Stomach (tissue), 19 donors: ENCODE measurements at regions of chr6 and their contacts with region 1.

Region 1: DNA sequence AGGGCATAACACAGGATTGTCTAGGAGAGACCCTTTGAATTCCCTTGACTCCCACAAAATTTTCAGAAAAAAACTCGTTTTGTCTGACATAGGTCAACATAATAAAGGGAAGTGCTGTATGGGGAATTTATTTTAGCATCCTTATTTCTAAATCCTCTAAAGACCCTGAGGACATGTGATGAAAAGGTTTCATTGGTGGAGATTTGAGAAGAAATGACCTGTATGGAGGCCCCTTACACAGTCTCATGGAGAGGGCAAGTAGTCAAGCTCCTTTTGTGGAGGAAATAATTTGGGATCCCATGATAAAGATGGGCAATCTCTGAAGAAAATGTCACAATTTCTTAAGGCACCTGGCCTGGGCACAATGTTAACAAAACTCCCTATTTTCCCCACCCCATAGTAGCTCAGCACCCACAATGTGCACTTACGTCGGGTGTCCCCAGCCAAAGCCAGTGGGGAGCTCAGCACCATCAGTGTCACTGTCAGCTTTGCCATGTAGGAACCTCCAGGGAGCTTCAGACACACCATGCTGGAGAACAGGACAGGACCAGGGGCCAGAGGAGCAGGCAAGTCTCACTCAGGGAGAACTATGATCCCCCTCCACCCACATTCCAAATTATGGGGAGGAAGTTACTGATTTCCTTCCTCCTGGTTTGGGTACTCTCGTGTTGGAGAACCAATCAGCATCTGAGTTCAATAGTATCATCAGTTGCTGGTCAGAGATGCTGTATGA is at the start of gene HLA-DRB5:
- DNase-seq: peak; percentile 4 to 34
- H3K4me3 ChIP-seq: no peak within 1 kb of the TSS
- H3K27ac ChIP-seq: no peak within 1 kb of the TSS
- H3K4me1 ChIP-seq: no peaks in the 10 kb centered on the region
- H3K27me3 ChIP-seq: no peaks in the 10 kb centered on the region
- CTCF ChIP-seq: no peak
- EP300 ChIP-seq: no peak
- POLR2A ChIP-seq: no peak
- total RNA-seq, gene HLA-DRB5: 0.43 to 39.1 (median 12.5) TPM in 3 of 5 donors, not detected in the others

Region 2: GRCh38 chr6:32382757-32383156 is 147.1 kb before region 1 on chr6:
- intact Hi-C with region 1: no loop called
- DNase-seq: no peak
- H3K4me3 ChIP-seq: no peak overlapping the region
- H3K27ac ChIP-seq: no peak overlapping the region
- H3K4me1 ChIP-seq: peaks cover 0 to 3% (median 0%) of the 10 kb centered on the region in 4 donors
- H3K27me3 ChIP-seq: no peaks in the 10 kb centered on the region
- CTCF ChIP-seq: no peak
- EP300 ChIP-seq: no peak
- POLR2A ChIP-seq: no peak

Region 3: GRCh38 chr6:32589598-32590449 is 60.0 kb after region 1 on chr6 and contains the start of gene HLA-DRB1:
- intact Hi-C with region 1: loop called (anchors 10 kb)
- DNase-seq: peak; percentile 37 to 61
- H3K4me3 ChIP-seq: no peak within 1 kb of the TSS
- H3K27ac ChIP-seq: peak within 1 kb of the TSS in 1 of 5 donors; percentile 46
- H3K4me1 ChIP-seq: no peaks in the 10 kb centered on the region
- H3K27me3 ChIP-seq: no peaks in the 10 kb centered on the region
- CTCF ChIP-seq: no peak
- EP300 ChIP-seq: no peak
- POLR2A ChIP-seq: no peak
- total RNA-seq, gene HLA-DRB1: 4.1 to 47.1 (median 25.3) TPM

Region 4: GRCh38 chr6:32666420-32667300 is 136.8 kb after region 1 on chr6 and contains the start of gene HLA-DQB1:
- intact Hi-C with region 1: no loop called
- DNase-seq: peak in 1 of 2 donors; percentile 61
- H3K4me3 ChIP-seq: no peak within 1 kb of the TSS
- H3K27ac ChIP-seq: peak within 1 kb of the TSS in 1 of 5 donors; percentile 47
- H3K4me1 ChIP-seq: no peaks in the 10 kb centered on the region
- H3K27me3 ChIP-seq: peaks cover 0 to 4% (median 0%) of the 10 kb centered on the region in 3 donors
- CTCF ChIP-seq: no peak
- EP300 ChIP-seq: no peak
- POLR2A ChIP-seq: no peak
- total RNA-seq, gene HLA-DQB1: 2.0 to 16.8 (median 4.5) TPM in 3 of 5 donors, not detected in the others